ENCODE measurements at regions of chr6 and their contacts with region 1.

Region 1: GRCh38 chr6:16345437-16346330 is 107.3 kb downstream of the GMPR start:
- DNase-seq: no peak
- ATAC-seq: peak; percentile 56 to 63
- H3K4me3 ChIP-seq: no peak overlapping the region
- H3K27ac ChIP-seq: peak overlapping the region; percentile 9 to 44 (median 34)
- H3K4me1 ChIP-seq: peaks cover 17 to 23% of the 10 kb centered on the region in 2 donors
- H3K27me3 ChIP-seq: no peaks in the 10 kb centered on the region
- CTCF ChIP-seq: no peak
- POLR2A ChIP-seq: no peak

Region 2: GRCh38 chr6:16380220-16380809 is 34.6 kb after region 1 on chr6:
- in situ Hi-C with region 1: no loop called
- intact Hi-C with region 1: no loop called
- DNase-seq: no peak
- ATAC-seq: peak in 1 of 2 donors; percentile 54
- H3K4me3 ChIP-seq: no peak overlapping the region
- H3K27ac ChIP-seq: no peak overlapping the region
- H3K4me1 ChIP-seq: peaks cover 34 to 47% of the 10 kb centered on the region in 2 donors
- H3K27me3 ChIP-seq: no peaks in the 10 kb centered on the region
- CTCF ChIP-seq: no peak
- POLR2A ChIP-seq: no peak

Region 3: GRCh38 chr6:16409531-16410441 is 64.1 kb after region 1 on chr6:
- in situ Hi-C with region 1: loop called in 2 of 4 experiments (anchors 5 to 10 kb)
- intact Hi-C with region 1: no loop called
- DNase-seq: peak; percentile 37 to 53
- ATAC-seq: peak; percentile 78 to 88
- H3K4me3 ChIP-seq: no peak overlapping the region
- H3K27ac ChIP-seq: no peak overlapping the region
- H3K4me1 ChIP-seq: peaks cover 5 to 12% of the 10 kb centered on the region in 2 donors
- H3K27me3 ChIP-seq: no peaks in the 10 kb centered on the region
- CTCF ChIP-seq: peak; percentile 71 to 82 (median 77)
- POLR2A ChIP-seq: no peak

Region 4: GRCh38 chr6:16493112-16493511 is 147.4 kb after region 1 on chr6:
- in situ Hi-C with region 1: no loop called
- intact Hi-C with region 1: no loop called
- DNase-seq: no peak
- ATAC-seq: no peak
- H3K4me3 ChIP-seq: no peak overlapping the region
- H3K27ac ChIP-seq: no peak overlapping the region
- H3K4me1 ChIP-seq: peaks cover 18 to 21% of the 10 kb centered on the region in 2 donors
- H3K27me3 ChIP-seq: no peaks in the 10 kb centered on the region
- CTCF ChIP-seq: no peak
- POLR2A ChIP-seq: no peak

Region 5: DNA sequence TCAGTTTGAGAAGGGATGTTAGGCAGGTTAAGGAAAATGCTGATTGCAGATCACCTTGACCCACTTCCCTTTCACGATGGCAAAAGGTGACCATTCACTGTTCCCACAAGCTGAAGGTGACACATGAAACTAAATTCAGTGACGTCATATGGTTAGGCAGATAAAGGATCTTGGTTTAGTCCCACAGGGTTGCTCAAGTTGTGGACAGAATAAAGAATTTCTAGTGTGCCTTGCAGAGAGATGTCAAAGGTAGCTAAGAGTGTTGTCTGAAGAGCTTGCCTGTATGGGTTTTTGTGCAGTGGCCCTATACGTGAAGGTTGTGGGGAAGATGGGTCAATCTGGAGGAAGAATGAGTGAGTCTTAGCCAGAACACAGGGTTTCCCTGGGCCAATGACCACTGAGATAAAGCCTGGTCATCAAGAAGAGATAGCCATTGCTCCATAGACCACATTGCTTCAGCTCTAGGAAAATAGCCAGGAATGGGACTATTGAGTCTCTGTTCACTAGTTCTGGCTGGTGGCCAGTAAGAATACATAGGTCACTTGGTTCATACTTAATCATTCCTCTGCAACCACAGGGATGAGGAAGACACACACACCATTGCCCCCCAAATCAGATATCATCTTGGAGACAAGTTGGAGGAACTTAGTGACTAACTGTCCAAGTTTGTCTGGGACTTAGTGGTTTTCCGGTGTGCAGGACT is 564.1 kb after region 1 on chr6:
- in situ Hi-C with region 1: no loop called
- intact Hi-C with region 1: no loop called
- DNase-seq: no peak
- ATAC-seq: no peak
- H3K4me3 ChIP-seq: no peak overlapping the region
- H3K27ac ChIP-seq: no peak overlapping the region
- H3K4me1 ChIP-seq: no peaks in the 10 kb centered on the region
- H3K27me3 ChIP-seq: no peaks in the 10 kb centered on the region
- CTCF ChIP-seq: no peak
- POLR2A ChIP-seq: no peak